Activated CD8-positive, alpha-beta T cell treated with anti-CD3 and anti-CD28 coated beads for 36 hours (primary cell): ENCODE measurements at regions of chr10 and their contacts with region 1.

Region 1: DNA sequence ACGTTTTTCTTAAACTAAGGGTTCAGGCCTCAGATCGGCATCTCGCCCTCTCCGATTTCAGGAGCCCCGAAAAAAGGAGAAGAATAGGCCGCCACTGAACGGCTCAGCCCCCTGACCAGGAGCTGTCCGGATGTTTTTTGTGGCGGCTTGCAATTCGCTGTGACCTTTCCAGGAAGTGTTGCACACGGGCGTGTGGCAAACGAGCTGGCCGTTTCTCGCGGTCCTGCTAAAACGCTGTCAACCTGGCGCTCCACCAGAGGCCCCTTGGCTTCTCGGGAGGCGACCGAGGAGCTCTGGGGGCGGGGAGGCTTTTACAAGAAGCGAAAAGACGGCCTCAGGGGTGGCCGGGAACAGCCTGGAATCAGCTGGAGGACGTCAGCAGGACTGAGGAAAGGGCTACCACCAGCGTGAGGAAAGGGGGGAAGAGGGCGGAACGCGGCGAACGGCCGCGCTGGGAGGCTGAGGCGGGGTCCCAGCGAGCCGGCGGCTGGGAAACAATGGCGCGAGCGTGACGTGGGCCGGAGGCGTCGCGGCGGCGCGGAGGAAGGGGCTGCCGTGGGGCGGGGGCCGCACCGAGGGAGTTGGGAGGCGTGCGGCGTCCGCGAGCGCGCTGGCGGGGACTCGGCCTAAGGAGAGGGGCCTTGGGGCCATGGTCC is 493 bp downstream of the NT5C2 start:
- DNase-seq: peak; percentile 84
- ATAC-seq: peak; percentile 52
- H3K4me3 Mint-ChIP-seq: peak overlapping the region; percentile 97
- H3K27ac Mint-ChIP-seq: peak overlapping the region; percentile 99
- H3K4me1 Mint-ChIP-seq: peaks cover 36% of the 10 kb centered on the region
- H3K27me3 Mint-ChIP-seq: peaks cover 1% of the 10 kb centered on the region
- CTCF ChIP-seq: no peak

Region 2: DNA sequence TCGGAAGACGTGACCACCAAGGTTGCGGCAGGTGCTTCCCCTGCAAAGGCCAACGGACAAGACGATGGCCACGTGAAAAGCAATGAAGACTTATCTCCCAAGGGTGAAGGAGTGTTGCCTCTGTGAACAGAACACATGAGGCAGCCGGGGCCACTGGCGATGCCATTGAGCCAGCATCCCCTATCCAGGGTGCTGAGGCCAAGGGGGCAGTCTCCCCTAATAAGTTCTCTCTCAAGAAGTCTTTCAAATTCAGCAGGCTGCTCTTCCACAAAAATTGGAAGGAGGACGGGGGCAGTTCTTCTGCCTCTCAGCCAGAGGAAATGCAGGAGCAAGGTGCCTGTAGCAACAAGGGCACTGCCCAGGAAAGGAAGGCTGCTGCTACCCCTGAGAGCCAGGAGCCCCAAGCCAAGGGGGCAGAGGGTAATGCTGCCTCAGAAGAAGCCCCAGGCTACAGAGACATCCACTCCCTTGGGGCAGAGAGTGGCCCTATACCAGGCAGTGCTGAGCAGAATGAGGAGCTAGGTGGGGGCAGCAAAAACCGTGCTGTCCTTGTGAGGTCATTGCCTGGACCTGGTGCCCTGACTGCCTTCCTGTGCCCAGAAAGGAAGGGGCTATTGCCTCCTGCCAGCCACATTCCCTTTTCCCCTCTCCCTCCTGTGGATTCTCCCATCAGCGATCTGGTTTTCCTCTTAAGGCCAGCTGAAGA is 16.8 kb before region 1 on chr10:
- CTCF ChIA-PET with region 1: interaction called, 5 read pairs
- POLR2A ChIA-PET with region 1: interaction called, 30 read pairs
- intact Hi-C with region 1: no loop called
- DNase-seq: no peak
- ATAC-seq: no peak
- H3K4me3 Mint-ChIP-seq: no peak overlapping the region
- H3K27ac Mint-ChIP-seq: no peak overlapping the region
- H3K4me1 Mint-ChIP-seq: peaks cover 9% of the 10 kb centered on the region
- H3K27me3 Mint-ChIP-seq: no peaks in the 10 kb centered on the region
- CTCF ChIP-seq: no peak

Region 3: DNA sequence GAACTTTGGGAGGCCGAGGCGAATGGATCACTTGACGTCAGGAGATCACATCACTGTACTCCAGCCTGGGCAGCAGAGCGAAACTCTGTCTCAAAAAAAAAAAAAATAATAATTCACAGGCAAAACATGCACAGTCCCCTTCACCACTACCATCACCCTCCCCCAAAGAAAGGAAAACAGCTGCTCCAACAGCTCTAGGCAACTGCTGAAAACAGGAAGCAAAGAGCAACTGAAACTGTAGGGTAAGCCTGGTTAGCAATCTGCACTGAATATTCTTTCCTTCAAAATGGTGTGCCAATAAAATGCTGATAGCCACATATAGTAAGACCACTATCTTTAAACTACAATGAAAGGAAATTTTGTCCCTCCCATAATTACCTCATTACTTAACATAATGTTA is 11.3 kb before region 1 on chr10:
- CTCF ChIA-PET with region 1: interaction called, 5 read pairs
- POLR2A ChIA-PET with region 1: interaction called, 30 read pairs
- intact Hi-C with region 1: no loop called
- DNase-seq: no peak
- ATAC-seq: peak; percentile 37
- H3K4me3 Mint-ChIP-seq: no peak overlapping the region
- H3K27ac Mint-ChIP-seq: peak overlapping the region; percentile 38
- H3K4me1 Mint-ChIP-seq: peaks cover 38% of the 10 kb centered on the region
- H3K27me3 Mint-ChIP-seq: no peaks in the 10 kb centered on the region
- CTCF ChIP-seq: no peak